Ovary (tissue), 10 donors: ENCODE measurements at regions of chr10 and their contacts with region 1.

Region 1: DNA sequence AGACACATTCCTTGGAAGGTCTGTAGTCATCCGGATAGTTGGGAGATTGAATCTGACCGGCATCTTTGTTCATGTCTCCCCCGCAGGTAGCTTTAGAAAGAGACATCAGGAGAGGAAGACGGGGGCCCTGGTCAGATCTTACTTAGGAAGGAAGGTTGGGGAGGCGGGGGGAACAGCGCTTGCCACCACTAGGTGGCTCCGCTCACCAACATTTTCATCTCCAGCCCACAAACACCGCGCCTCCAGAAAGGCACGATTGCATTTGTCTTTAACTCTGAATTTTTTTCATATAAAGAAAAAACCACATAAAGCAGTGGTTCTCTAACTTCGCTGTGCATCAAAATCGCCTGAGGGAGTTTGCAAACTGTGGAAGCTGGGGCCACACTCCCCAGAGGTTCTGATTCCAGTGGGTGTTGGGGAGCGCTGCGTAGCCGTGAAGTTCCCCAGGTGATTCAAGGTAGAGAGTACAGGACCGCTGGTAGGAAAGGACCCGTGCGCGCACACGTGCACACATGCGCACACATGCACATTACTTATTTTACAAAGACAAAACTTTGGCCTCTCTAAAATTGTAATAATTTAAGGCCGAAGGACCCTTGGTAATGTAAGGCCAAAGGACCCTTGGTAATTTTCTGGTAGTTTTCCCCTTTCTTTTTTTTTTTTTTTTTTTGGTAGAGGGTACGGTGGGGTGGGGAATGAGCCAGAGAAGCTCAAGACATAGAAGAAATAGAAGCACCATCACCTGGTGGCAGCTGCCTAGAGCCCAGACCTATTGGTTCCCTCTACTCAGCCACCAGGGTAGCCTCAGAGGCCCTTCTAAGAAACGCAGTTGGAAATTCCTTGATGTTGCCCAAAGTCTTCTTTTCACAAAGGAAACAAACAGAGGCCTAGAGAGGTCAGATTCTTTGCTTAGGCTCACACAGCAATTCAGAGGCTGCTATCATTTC is 37.4 kb upstream of the OPALIN start:
- DNase-seq: peak; percentile 60 to 81 (median 69)
- H3K4me3 ChIP-seq: no peak overlapping the region
- H3K27ac ChIP-seq: no peak overlapping the region
- H3K4me1 ChIP-seq: no peaks in the 10 kb centered on the region
- H3K27me3 ChIP-seq: no peaks in the 10 kb centered on the region
- CTCF ChIP-seq: peak; percentile 47 to 80 (median 78)
- EP300 ChIP-seq: no peak
- POLR2A ChIP-seq: no peak

Region 2: DNA sequence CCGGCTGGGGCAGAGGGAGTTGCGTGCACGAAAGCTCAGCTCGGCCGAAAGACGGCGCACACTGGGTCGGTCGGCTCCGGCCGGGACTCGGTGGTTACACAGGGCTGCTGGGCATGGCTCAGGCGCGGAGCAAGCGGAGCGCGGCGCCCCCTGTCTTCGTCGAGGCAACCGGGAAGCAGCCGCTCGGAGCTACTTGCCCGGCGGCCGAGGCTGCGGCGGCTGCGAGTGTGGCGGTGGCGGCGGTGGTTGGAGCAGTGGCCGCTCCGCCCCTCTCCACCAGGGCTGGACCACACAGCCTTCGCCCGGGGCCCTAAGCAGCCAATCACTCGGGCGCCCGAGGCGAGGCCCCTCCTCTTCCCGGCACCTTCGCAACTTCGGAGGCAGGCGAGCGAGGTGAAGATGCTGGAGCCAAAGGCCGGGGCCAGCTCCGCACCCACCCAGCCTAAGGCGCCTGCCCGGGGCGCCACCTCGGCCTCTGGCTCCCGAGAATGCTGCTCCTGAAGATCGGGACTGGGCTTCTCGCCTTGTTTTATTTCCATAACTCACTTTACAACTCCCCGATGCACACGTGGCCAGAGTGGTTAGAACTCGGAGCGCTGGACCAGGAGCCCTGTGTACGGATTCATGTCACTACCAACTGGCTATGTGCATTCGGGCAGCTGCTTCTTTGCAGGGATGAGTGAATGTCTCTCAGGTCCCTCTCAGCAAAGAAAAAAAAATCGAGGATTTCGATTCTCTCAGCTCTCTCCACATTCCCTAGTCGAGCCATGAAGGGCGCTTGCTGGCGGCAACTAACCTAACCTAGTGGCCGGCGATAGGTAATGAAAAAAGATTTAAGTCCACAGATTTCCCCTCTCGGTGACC is 117.7 kb after region 1 on chr10 and contains the start of gene TLL2:
- intact Hi-C with region 1: loop called (anchors 5 to 10 kb)
- DNase-seq: peak; percentile 65 to 87 (median 78)
- H3K4me3 ChIP-seq: peak within 1 kb of the TSS; percentile 41
- H3K27ac ChIP-seq: no peak within 1 kb of the TSS
- H3K4me1 ChIP-seq: peaks cover 10% of the 10 kb centered on the region
- H3K27me3 ChIP-seq: no peaks in the 10 kb centered on the region
- CTCF ChIP-seq: peak; percentile 43 to 77 (median 50)
- EP300 ChIP-seq: no peak
- POLR2A ChIP-seq: no peak
- total RNA-seq, gene TLL2: 0.07 to 0.46 (median 0.25) TPM in 6 of 7 donors, not detected in the other

Region 3: GRCh38 chr10:96642973-96643372 is 246.8 kb after region 1 on chr10:
- intact Hi-C with region 1: loop called in 1 of 4 experiments (anchors 10 kb)
- DNase-seq: peak in 2 of 5 donors; percentile 52 to 70
- H3K4me3 ChIP-seq: no peak overlapping the region
- H3K27ac ChIP-seq: no peak overlapping the region
- H3K4me1 ChIP-seq: no peaks in the 10 kb centered on the region
- H3K27me3 ChIP-seq: no peaks in the 10 kb centered on the region
- CTCF ChIP-seq: no peak
- EP300 ChIP-seq: no peak
- POLR2A ChIP-seq: no peak

Region 4: DNA sequence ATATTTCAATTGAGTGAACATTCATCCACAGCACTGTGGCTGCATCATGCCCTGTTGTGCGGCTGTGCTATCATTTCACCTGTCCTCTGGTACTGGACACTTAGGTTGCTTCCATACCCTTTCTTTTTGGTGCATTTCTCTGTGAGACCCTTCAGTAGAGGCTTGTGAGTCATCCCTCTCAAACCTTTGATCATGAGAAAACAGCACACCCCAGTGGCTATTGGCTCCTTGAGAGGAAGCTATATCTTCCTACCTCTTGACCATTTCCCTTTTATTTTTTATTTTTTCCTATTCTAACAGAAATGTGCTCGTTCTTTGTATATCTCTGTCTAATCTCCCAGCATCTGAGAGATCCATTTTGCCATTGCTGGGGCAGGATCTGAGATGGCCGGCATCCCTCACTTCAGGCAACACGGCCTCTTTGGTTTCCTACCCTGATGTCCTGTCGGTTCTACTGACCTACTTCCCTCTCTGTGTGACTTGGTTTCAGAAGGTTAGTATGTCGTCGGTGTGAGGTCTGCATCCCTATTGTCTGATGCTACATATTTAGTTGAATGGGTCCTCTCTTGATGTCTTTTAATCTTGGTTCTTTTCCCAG is 347.9 kb after region 1 on chr10:
- intact Hi-C with region 1: loop called in 3 of 4 experiments (anchors 10 kb)
- DNase-seq: peak in 3 of 5 donors; percentile 12 to 42 (median 31)
- H3K4me3 ChIP-seq: no peak overlapping the region
- H3K27ac ChIP-seq: no peak overlapping the region
- H3K4me1 ChIP-seq: no peaks in the 10 kb centered on the region
- H3K27me3 ChIP-seq: no peaks in the 10 kb centered on the region
- CTCF ChIP-seq: peak in 2 of 3 donors; percentile 38 to 44
- EP300 ChIP-seq: no peak
- POLR2A ChIP-seq: no peak

Region 5: GRCh38 chr10:97037365-97038361 is 641.5 kb after region 1 on chr10:
- intact Hi-C with region 1: loop called in 1 of 4 experiments (anchors 10 kb)
- DNase-seq: peak; percentile 72 to 83 (median 80)
- H3K4me3 ChIP-seq: peak overlapping the region; percentile 17
- H3K27ac ChIP-seq: no peak overlapping the region
- H3K4me1 ChIP-seq: peaks cover 1% of the 10 kb centered on the region
- H3K27me3 ChIP-seq: no peaks in the 10 kb centered on the region
- CTCF ChIP-seq: peak; percentile 57 to 83 (median 76)
- EP300 ChIP-seq: no peak
- POLR2A ChIP-seq: no peak

Region 6: GRCh38 chr10:97200616-97201015 is 804.4 kb after region 1 on chr10:
- intact Hi-C with region 1: loop called in 1 of 4 experiments (anchors 10 kb)
- DNase-seq: no peak
- H3K4me3 ChIP-seq: no peak overlapping the region
- H3K27ac ChIP-seq: no peak overlapping the region
- H3K4me1 ChIP-seq: peaks cover 2% of the 10 kb centered on the region
- H3K27me3 ChIP-seq: no peaks in the 10 kb centered on the region
- CTCF ChIP-seq: no peak
- EP300 ChIP-seq: no peak
- POLR2A ChIP-seq: no peak